ENCODE measurements at regions of chr3 and their contacts with region 1.

Region 1: DNA sequence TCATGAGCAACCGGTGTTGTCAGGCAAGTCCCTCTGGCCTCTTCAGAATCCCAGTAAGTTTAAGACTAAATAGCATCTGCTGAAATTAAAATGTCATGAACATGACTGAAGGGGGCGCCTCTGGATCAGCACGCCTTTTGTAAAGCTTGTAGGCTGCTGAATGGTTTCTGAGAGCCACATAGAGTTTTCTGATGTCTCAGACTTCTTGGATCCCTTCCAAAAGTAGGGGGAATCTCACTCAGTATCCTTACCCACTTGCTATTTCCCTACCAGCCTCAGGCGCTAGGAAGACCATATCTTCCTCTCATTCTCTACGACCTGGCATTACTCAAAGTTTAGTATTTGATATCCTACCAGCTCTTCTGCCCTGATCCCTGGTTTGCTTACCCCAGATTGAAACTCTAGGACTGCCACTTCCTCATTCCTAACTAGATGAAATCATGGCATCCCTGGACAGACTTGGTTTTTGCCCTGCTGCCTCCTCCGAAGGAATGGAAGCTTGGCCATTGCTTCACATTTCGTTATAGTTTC is 62.7 kb upstream of the CD47 start:
- DNase-seq: peak; percentile 37
- ATAC-seq: peak; percentile 86
- H3K4me3 ChIP-seq: no peak overlapping the region
- H3K27ac ChIP-seq: no peak overlapping the region
- H3K4me1 ChIP-seq: no peaks in the 10 kb centered on the region
- H3K27me3 ChIP-seq: no peaks in the 10 kb centered on the region
- CTCF ChIP-seq: peak; percentile 68
- EP300 ChIP-seq: no peak
- POLR2A ChIP-seq: no peak
- RAD21 ChIP-seq: peak; percentile 63

Region 2: GRCh38 chr3:108130701-108131474 is 22.6 kb before region 1 on chr3:
- CTCF ChIA-PET with region 1: no interaction called
- POLR2A ChIA-PET with region 1: no interaction called
- in situ Hi-C with region 1: no loop called
- intact Hi-C with region 1: no loop called
- DNase-seq: no peak
- ATAC-seq: no peak
- H3K4me3 ChIP-seq: no peak overlapping the region
- H3K27ac ChIP-seq: no peak overlapping the region
- H3K4me1 ChIP-seq: no peaks in the 10 kb centered on the region
- H3K27me3 ChIP-seq: no peaks in the 10 kb centered on the region; a peak in 2 of 5 replicates
- CTCF ChIP-seq: no peak
- EP300 ChIP-seq: no peak
- POLR2A ChIP-seq: no peak
- RAD21 ChIP-seq: no peak

Region 3: DNA sequence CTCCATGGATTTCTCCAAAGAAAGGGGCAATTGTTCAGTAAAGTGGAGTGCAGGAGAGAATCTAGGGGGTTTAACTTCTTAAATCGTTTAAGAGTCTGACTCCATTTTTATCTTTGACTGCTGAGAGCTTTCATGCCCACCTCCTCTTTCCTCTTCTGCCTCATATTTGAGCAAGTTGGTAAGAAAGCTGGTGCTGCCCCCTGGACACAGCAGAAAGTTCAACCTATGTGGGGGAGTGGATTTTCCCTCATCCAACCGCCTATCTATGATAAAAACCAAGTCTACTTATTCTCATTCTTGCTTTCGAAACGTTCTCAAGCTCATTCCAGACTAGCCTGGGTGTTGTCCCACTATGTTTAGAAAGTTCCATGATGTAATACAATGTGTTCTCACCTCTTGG is 168.8 kb after region 1 on chr3:
- CTCF ChIA-PET with region 1: no interaction called
- POLR2A ChIA-PET with region 1: no interaction called
- in situ Hi-C with region 1: no loop called
- intact Hi-C with region 1: loop called (anchors 1 kb)
- DNase-seq: no peak
- ATAC-seq: no peak
- H3K4me3 ChIP-seq: no peak overlapping the region
- H3K27ac ChIP-seq: no peak overlapping the region
- H3K4me1 ChIP-seq: no peaks in the 10 kb centered on the region
- H3K27me3 ChIP-seq: no peaks in the 10 kb centered on the region; a peak in 1 of 5 replicates
- CTCF ChIP-seq: 0 out of 2 replicates have a peak, but pooled peaks have one; percentile 24
- EP300 ChIP-seq: no peak
- POLR2A ChIP-seq: no peak
- RAD21 ChIP-seq: no peak

Region 4: GRCh38 chr3:108406661-108407206 is 253.2 kb after region 1 on chr3:
- CTCF ChIA-PET with region 1: interaction called, 14 read pairs
- POLR2A ChIA-PET with region 1: no interaction called
- in situ Hi-C with region 1: loop called (anchors 5 kb)
- intact Hi-C with region 1: loop called (anchors 1 kb)
- DNase-seq: peak; percentile 71
- ATAC-seq: peak; percentile 99
- H3K4me3 ChIP-seq: no peak overlapping the region
- H3K27ac ChIP-seq: no peak overlapping the region
- H3K4me1 ChIP-seq: peaks cover 8% of the 10 kb centered on the region
- H3K27me3 ChIP-seq: peaks cover 0 to 4% of the 10 kb centered on the region in 2 experiments; a peak in 2 of 5 replicates
- CTCF ChIP-seq: peak; percentile 82
- EP300 ChIP-seq: no peak
- POLR2A ChIP-seq: no peak
- RAD21 ChIP-seq: peak; percentile 68

Region 5: DNA sequence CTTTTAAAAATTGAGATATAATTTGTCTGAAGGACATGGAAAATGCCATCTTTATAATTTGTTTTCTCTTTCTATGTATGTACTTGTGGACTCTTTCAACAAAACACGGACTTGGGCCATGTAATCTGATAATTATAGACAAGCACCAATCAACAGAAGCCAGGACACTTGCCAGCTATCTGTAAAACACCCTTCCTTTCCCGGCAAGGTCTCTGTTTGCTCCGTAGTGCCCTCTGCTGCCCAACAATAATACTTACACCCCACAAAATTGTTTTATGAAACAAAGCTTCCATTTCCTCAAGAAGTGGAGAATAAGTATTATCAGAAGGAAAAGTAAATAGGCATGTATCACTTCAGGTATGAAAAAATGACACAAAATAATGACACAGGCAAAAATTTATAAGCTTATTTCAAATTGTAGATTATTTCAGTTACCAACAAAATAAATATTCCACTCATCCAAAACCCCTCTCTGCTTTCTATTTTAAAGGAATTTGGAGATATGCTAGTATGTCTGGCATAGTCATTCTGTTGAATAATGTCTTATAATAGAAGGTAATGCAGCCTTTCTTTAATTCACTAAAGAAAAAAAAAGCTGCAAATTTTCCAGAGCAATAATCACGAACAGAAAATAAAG is 324.1 kb after region 1 on chr3:
- CTCF ChIA-PET with region 1: interaction called, 9 read pairs
- POLR2A ChIA-PET with region 1: no interaction called
- in situ Hi-C with region 1: no loop called
- intact Hi-C with region 1: loop called (anchors 1 kb)
- DNase-seq: peak; percentile 52
- ATAC-seq: peak; percentile 80
- H3K4me3 ChIP-seq: no peak overlapping the region
- H3K27ac ChIP-seq: no peak overlapping the region
- H3K4me1 ChIP-seq: no peaks in the 10 kb centered on the region
- H3K27me3 ChIP-seq: no peaks in the 10 kb centered on the region; a peak in 1 of 5 replicates
- CTCF ChIP-seq: peak; percentile 71
- EP300 ChIP-seq: no peak
- POLR2A ChIP-seq: no peak
- RAD21 ChIP-seq: no peak

Region 6: GRCh38 chr3:108914774-108915641 is 761.5 kb after region 1 on chr3:
- CTCF ChIA-PET with region 1: no interaction called
- POLR2A ChIA-PET with region 1: no interaction called
- in situ Hi-C with region 1: no loop called
- intact Hi-C with region 1: no loop called
- DNase-seq: peak; percentile 61
- ATAC-seq: peak; percentile 96
- H3K4me3 ChIP-seq: no peak overlapping the region
- H3K27ac ChIP-seq: no peak overlapping the region
- H3K4me1 ChIP-seq: no peaks in the 10 kb centered on the region
- H3K27me3 ChIP-seq: no peaks in the 10 kb centered on the region
- CTCF ChIP-seq: peak; percentile 90
- EP300 ChIP-seq: no peak
- POLR2A ChIP-seq: no peak
- RAD21 ChIP-seq: peak; percentile 41; the same call in 1 of the 2 replicates